ENCODE measurements at regions of chr20 and their contacts with region 1.

Region 1: GRCh38 chr20:44310664-44311639 is at the start of gene FITM2:
- DNase-seq: peak; percentile 98
- ATAC-seq: peak; percentile 93
- H3K4me3 ChIP-seq: peak within 1 kb of the TSS; percentile 70 to 96 (median 78)
- H3K27ac ChIP-seq: peak within 1 kb of the TSS; percentile 37
- H3K4me1 ChIP-seq: peaks cover 27% of the 10 kb centered on the region
- H3K27me3 ChIP-seq: peaks cover 2 to 4% of the 10 kb centered on the region in 2 experiments; a peak in 1 of 5 replicates
- CTCF ChIP-seq: peak; percentile 100
- EP300 ChIP-seq: 0 out of 4 replicates have a peak, but pooled peaks of 1 of the 2 experiments have one; percentile 37
- POLR2A ChIP-seq: peak; percentile 75 to 97
- RAD21 ChIP-seq: peak; percentile 100
- total RNA-seq, gene FITM2: 13.6 and 24.5 TPM in 2 replicates

Region 2: GRCh38 chr20:43549416-43550065 is 761.4 kb before region 1 on chr20:
- CTCF ChIA-PET with region 1: no interaction called
- POLR2A ChIA-PET with region 1: no interaction called
- in situ Hi-C with region 1: no loop called
- intact Hi-C with region 1: no loop called
- DNase-seq: no peak
- ATAC-seq: no peak
- H3K4me3 ChIP-seq: no peak overlapping the region
- H3K27ac ChIP-seq: no peak overlapping the region
- H3K4me1 ChIP-seq: peaks cover 68% of the 10 kb centered on the region
- H3K27me3 ChIP-seq: no peaks in the 10 kb centered on the region
- CTCF ChIP-seq: 0 out of 2 replicates have a peak, but pooled peaks have one; percentile 8
- EP300 ChIP-seq: no peak
- POLR2A ChIP-seq: no peak
- RAD21 ChIP-seq: no peak

Region 3: DNA sequence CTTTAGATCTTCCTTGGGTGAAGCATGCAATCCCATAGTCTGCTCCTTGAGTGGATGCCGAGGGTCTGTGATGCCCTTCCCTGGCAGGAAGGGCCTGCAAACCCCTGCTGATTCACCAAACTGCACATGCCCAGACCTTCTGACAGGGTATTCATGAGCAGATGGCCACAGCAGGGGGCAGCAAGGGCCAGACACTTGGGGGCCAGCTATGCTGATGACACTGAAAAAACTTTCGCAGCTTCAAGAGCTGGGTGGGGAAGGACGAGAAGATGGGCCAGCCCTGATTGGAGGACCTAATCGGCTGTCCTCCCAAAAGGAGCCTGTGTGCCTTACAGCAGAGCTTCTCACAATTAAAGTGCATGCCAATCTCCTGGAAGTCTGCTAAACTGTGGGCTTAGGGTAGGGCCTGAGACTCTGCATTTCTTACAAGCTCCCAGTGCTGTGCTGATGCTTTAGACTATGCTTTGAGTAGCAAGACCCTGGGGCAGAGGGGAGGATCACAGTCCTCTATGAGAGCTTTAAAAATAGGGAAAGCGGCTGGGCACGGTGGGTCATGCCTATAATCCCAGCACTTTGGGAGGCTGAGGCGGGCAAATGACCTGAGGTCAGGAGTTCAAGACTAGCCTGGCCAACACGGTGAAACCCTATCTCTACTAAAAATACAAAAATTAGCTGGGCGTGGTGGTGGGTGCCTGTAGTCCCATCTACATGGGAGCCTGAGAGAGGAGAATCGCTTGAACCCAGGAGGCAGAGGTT is 79.1 kb before region 1 on chr20:
- CTCF ChIA-PET with region 1: interaction called, 3 read pairs
- POLR2A ChIA-PET with region 1: interaction called, 6 read pairs
- in situ Hi-C with region 1: no loop called
- intact Hi-C with region 1: loop called (anchors 1 kb)
- DNase-seq: peak; percentile 49
- ATAC-seq: peak; percentile 73
- H3K4me3 ChIP-seq: no peak overlapping the region
- H3K27ac ChIP-seq: no peak overlapping the region
- H3K4me1 ChIP-seq: peaks cover 29% of the 10 kb centered on the region
- H3K27me3 ChIP-seq: no peaks in the 10 kb centered on the region; a peak in 1 of 5 replicates
- CTCF ChIP-seq: peak; percentile 75
- EP300 ChIP-seq: no peak
- POLR2A ChIP-seq: no peak
- RAD21 ChIP-seq: 0 out of 2 replicates have a peak, but pooled peaks have one; percentile 13

Region 4: GRCh38 chr20:44253528-44253927 is 57.4 kb before region 1 on chr20:
- CTCF ChIA-PET with region 1: interaction called, 20 read pairs
- POLR2A ChIA-PET with region 1: interaction called, 5 read pairs
- in situ Hi-C with region 1: loop called (anchors 5 kb)
- intact Hi-C with region 1: loop called (anchors 1 kb)
- DNase-seq: peak; percentile 69
- ATAC-seq: peak; percentile 83
- H3K4me3 ChIP-seq: no peak overlapping the region
- H3K27ac ChIP-seq: no peak overlapping the region
- H3K4me1 ChIP-seq: peaks cover 15% of the 10 kb centered on the region
- H3K27me3 ChIP-seq: no peaks in the 10 kb centered on the region; a peak in 1 of 5 replicates
- CTCF ChIP-seq: peak; percentile 86
- EP300 ChIP-seq: peak in 1 of 2 experiments; percentile 15; a peak in 1 of 4 replicates
- POLR2A ChIP-seq: no peak
- RAD21 ChIP-seq: peak; percentile 47

Region 5: GRCh38 chr20:44370639-44371220 is 59.8 kb after region 1 on chr20:
- CTCF ChIA-PET with region 1: no interaction called
- POLR2A ChIA-PET with region 1: no interaction called
- in situ Hi-C with region 1: no loop called
- intact Hi-C with region 1: loop called (anchors 5 kb)
- DNase-seq: peak; percentile 97
- ATAC-seq: peak; percentile 99
- H3K4me3 ChIP-seq: peak overlapping the region in 2 of 3 experiments; percentile 34 to 63; a peak in 4 of 6 replicates
- H3K27ac ChIP-seq: peak overlapping the region; percentile 60
- H3K4me1 ChIP-seq: peaks cover 42% of the 10 kb centered on the region
- H3K27me3 ChIP-seq: no peaks in the 10 kb centered on the region
- CTCF ChIP-seq: peak; percentile 61
- EP300 ChIP-seq: peak; percentile 67 to 91; a peak in 2 of 4 replicates
- POLR2A ChIP-seq: no peak
- RAD21 ChIP-seq: peak; percentile 67; the same call in 1 of the 2 replicates

Region 6: GRCh38 chr20:44467289-44467883 is 156.4 kb after region 1 on chr20:
- CTCF ChIA-PET with region 1: interaction called, 6 read pairs
- POLR2A ChIA-PET with region 1: interaction called, 5 read pairs
- in situ Hi-C with region 1: loop called (anchors 5 kb)
- intact Hi-C with region 1: loop called (anchors 2 kb)
- DNase-seq: peak; percentile 48
- ATAC-seq: peak; percentile 43
- H3K4me3 ChIP-seq: peak overlapping the region in 2 of 3 experiments; percentile 0 to 38; a peak in 1 of 6 replicates
- H3K27ac ChIP-seq: no peak overlapping the region
- H3K4me1 ChIP-seq: peaks cover 60% of the 10 kb centered on the region
- H3K27me3 ChIP-seq: no peaks in the 10 kb centered on the region
- CTCF ChIP-seq: no peak
- EP300 ChIP-seq: no peak; a peak in 1 of 4 replicates
- POLR2A ChIP-seq: no peak
- RAD21 ChIP-seq: no peak